ENCODE measurements at regions of chr17 and their contacts with region 1.

Region 1: DNA sequence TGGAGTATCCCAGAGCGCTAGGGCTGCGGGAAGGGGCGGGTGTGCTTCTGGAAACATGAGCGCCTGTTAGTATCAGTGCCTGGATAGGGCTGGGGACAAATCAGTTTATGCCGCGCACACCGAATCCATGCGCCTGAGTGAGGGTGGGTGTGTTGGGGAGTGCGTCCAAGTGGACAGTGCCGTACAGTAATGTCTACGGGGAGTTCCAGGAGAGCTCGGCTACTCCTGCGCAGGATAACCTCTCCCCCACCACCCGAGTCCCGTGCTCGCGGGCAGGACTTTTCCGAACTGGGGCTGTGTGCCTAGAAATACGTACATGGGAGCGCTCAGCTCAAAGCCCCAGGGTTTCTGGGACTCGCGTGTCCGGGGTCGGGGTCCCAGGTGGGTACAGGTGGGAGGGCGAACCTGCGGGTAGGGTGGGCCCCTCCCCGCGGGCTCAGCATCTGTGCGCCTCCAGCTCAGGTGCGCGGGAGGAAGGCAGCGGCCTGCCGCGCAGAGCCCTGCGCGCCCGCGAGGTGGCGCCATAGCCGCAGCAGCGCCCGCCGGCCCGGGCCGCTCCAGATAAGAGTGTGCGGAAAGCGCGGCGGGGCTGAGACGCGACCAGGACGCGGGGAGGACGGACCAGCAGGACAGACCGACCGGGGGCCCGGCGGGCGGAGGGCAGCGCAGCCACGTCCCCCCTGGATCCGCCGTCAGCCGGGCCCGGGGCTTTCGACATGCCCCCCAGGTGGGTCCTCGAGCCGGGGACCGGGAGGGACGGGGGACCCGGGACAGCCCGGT is at the start of gene HIC1:
- DNase-seq: peak; percentile 64 to 88 (median 73)
- ATAC-seq: peak; percentile 45
- H3K4me3 ChIP-seq: peak within 1 kb of the TSS; percentile 48 to 65
- H3K4me3 Mint-ChIP-seq: peak within 1 kb of the TSS; percentile 78
- H3K27ac ChIP-seq: peak within 1 kb of the TSS; percentile 56 to 74
- H3K27ac Mint-ChIP-seq: peak within 1 kb of the TSS; percentile 81
- H3K4me1 ChIP-seq: peaks cover 64% of the 10 kb centered on the region
- H3K4me1 Mint-ChIP-seq: peaks cover 31% of the 10 kb centered on the region
- H3K27me3 ChIP-seq: peaks cover 0 to 2% of the 10 kb centered on the region in 2 experiments
- H3K27me3 Mint-ChIP-seq: peaks cover 13% of the 10 kb centered on the region
- CTCF ChIP-seq: peak; percentile 85
- total RNA-seq, gene HIC1: 12.1 to 13.0 TPM

Region 2: DNA sequence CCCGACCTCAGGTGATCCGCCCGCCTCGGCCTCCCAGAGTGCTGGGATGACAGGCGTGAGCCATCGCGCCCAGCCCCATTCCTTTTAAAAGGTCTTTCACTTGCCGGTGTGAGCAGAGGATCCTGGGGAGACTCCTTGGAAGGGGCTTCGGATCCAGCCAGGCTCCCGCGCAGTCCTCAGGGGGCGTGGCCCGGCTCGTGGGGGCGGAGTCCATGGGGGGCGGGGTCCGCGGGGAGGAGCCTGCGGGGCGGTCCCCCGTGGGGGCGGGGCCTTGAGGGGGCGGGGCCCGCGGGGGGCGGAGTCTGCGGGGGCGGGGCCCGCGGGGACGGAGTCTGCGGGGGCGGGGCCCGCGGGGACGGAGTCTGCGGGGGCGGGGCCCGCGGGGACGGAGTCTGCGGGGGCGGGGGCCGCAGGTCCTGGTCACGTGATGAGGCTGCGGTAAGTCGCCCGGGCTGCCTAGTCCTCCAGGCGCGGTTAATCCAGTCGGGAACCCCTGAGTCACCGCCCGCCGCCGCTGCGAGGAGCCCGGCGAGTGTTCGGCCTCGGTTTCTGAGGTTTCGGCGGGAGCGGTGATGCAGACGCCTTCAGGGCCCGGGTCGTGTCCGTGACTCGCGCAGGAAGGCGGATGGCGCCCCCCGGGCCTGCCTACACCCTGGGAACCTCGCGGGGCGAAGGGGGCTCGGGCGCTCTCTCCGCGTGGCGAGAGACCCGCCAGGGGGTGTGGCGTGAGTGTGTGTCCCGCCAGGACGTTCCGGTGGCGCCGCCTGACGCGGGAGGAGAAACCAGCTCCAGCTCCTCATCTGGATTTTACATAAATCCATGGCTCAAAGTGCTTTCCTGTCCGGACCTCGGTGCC is 851.4 kb before region 1 on chr17:
- CTCF ChIA-PET with region 1: no interaction called
- POLR2A ChIA-PET with region 1: no interaction called
- intact Hi-C with region 1: loop called in 1 of 2 experiments (anchors 5 kb)
- DNase-seq: peak; percentile 30 to 78 (median 52)
- ATAC-seq: peak; percentile 66
- H3K4me3 ChIP-seq: peak overlapping the region in 1 of 2 experiments; percentile 35
- H3K4me3 Mint-ChIP-seq: peak overlapping the region; percentile 5
- H3K27ac ChIP-seq: no peak overlapping the region
- H3K27ac Mint-ChIP-seq: no peak overlapping the region
- H3K4me1 ChIP-seq: peaks cover 48% of the 10 kb centered on the region
- H3K4me1 Mint-ChIP-seq: peaks cover 34% of the 10 kb centered on the region
- H3K27me3 ChIP-seq: no peaks in the 10 kb centered on the region
- H3K27me3 Mint-ChIP-seq: no peaks in the 10 kb centered on the region
- CTCF ChIP-seq: no peak

Region 3: DNA sequence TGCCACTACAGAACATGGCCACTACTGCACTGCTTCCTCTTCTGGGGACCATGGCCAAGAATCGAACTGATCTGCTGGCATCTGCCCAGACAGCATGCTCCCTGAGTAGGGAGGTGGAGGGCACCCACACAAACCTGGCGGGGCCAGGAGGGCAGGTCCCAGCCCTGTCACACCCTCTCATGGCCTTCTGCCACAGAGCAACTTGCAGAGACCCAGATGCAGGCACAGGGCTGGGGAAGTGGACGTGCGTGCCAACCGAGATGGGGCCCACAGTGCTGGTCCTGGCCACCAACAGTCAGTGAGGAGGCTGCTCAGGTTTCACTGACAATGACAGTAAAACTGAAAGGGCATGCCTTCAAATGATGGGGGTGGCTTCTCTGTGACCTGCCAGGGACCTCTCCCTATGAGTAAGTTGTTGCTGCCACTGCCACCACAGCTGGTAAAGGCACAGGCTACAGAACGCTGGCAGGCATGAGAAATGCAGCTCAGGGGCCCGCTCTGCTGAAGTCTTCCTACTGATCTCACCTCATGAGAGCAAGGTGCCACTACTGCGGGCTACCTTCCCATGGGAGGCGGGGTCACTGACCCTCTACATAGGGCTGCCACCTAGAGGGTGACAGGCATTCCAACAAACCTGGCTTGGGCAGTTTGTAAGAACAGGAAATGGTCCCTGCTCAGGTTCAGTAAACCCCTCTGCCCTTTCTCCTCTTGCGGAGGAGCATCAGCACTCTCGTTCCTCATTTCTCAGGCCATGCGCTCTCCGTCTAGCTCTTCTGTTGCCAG is 15.7 kb after region 1 on chr17:
- CTCF ChIA-PET with region 1: interaction called, 19 read pairs
- POLR2A ChIA-PET with region 1: no interaction called
- intact Hi-C with region 1: no loop called
- DNase-seq: peak in 3 of 9 experiments; percentile 38 to 55 (median 48)
- ATAC-seq: peak; percentile 78
- H3K4me3 ChIP-seq: no peak overlapping the region
- H3K4me3 Mint-ChIP-seq: no peak overlapping the region
- H3K27ac ChIP-seq: peak overlapping the region in 1 of 2 experiments; percentile 26
- H3K27ac Mint-ChIP-seq: peak overlapping the region; percentile 73
- H3K4me1 ChIP-seq: peaks cover 9% of the 10 kb centered on the region
- H3K4me1 Mint-ChIP-seq: peaks cover 37% of the 10 kb centered on the region
- H3K27me3 ChIP-seq: no peaks in the 10 kb centered on the region
- H3K27me3 Mint-ChIP-seq: peaks cover 3% of the 10 kb centered on the region
- CTCF ChIP-seq: no peak

Region 4: GRCh38 chr17:2172077-2172851 is 117.6 kb after region 1 on chr17:
- CTCF ChIA-PET with region 1: no interaction called
- POLR2A ChIA-PET with region 1: no interaction called
- intact Hi-C with region 1: loop called in 1 of 2 experiments (anchors 5 kb)
- DNase-seq: no peak
- ATAC-seq: no peak
- H3K4me3 ChIP-seq: no peak overlapping the region
- H3K4me3 Mint-ChIP-seq: no peak overlapping the region
- H3K27ac ChIP-seq: no peak overlapping the region
- H3K27ac Mint-ChIP-seq: no peak overlapping the region
- H3K4me1 ChIP-seq: no peaks in the 10 kb centered on the region
- H3K4me1 Mint-ChIP-seq: no peaks in the 10 kb centered on the region
- H3K27me3 ChIP-seq: no peaks in the 10 kb centered on the region
- H3K27me3 Mint-ChIP-seq: no peaks in the 10 kb centered on the region
- CTCF ChIP-seq: no peak

Region 5: GRCh38 chr17:2259769-2260536 is 205.3 kb after region 1 on chr17:
- CTCF ChIA-PET with region 1: interaction called, 99 read pairs
- POLR2A ChIA-PET with region 1: interaction called, 10 read pairs
- intact Hi-C with region 1: no loop called
- DNase-seq: peak; percentile 7 to 87 (median 61)
- ATAC-seq: peak; percentile 55
- H3K4me3 ChIP-seq: peak overlapping the region in 1 of 2 experiments; percentile 21
- H3K4me3 Mint-ChIP-seq: peak overlapping the region; percentile 59
- H3K27ac ChIP-seq: peak overlapping the region; percentile 43 to 74
- H3K27ac Mint-ChIP-seq: peak overlapping the region; percentile 95
- H3K4me1 ChIP-seq: peaks cover 67% of the 10 kb centered on the region
- H3K4me1 Mint-ChIP-seq: peaks cover 69% of the 10 kb centered on the region
- H3K27me3 ChIP-seq: no peaks in the 10 kb centered on the region
- H3K27me3 Mint-ChIP-seq: no peaks in the 10 kb centered on the region
- CTCF ChIP-seq: no peak

Region 6: DNA sequence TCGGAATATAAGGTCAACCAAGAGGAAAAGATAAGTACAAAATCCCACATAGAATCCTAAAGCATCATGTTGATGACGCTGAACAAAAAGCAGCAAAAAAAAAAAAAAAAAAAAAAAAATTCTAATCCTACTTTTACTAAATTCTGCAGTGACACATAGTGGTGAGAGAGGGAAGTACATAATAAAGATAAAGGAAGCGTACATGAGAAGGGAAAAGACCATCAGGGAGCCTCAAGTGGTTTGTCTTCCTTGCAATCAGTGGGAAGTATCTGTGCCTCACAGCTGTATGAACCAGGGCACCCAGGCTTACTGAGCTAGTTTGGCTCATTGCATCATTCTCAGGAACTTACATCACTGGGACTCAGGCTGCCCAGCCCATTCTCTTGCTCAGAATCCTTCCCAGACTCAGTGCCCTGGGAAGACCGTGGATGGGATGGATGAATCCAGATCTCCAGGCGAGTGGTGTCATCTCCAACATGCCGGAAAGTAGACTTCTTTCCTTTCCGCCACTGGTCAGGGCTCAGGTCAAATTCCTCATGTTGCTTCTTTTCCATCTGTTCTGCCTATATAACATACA is 227.7 kb after region 1 on chr17:
- CTCF ChIA-PET with region 1: interaction called, 137 read pairs
- POLR2A ChIA-PET with region 1: interaction called, 3 read pairs
- intact Hi-C with region 1: loop called (anchors 1 kb)
- DNase-seq: peak in 2 of 9 experiments; percentile 71 to 81
- ATAC-seq: peak; percentile 77
- H3K4me3 ChIP-seq: no peak overlapping the region
- H3K4me3 Mint-ChIP-seq: no peak overlapping the region
- H3K27ac ChIP-seq: no peak overlapping the region
- H3K27ac Mint-ChIP-seq: peak overlapping the region; percentile 53
- H3K4me1 ChIP-seq: peaks cover 9% of the 10 kb centered on the region
- H3K4me1 Mint-ChIP-seq: peaks cover 21% of the 10 kb centered on the region
- H3K27me3 ChIP-seq: no peaks in the 10 kb centered on the region
- H3K27me3 Mint-ChIP-seq: no peaks in the 10 kb centered on the region
- CTCF ChIP-seq: peak; percentile 84

Region 7: DNA sequence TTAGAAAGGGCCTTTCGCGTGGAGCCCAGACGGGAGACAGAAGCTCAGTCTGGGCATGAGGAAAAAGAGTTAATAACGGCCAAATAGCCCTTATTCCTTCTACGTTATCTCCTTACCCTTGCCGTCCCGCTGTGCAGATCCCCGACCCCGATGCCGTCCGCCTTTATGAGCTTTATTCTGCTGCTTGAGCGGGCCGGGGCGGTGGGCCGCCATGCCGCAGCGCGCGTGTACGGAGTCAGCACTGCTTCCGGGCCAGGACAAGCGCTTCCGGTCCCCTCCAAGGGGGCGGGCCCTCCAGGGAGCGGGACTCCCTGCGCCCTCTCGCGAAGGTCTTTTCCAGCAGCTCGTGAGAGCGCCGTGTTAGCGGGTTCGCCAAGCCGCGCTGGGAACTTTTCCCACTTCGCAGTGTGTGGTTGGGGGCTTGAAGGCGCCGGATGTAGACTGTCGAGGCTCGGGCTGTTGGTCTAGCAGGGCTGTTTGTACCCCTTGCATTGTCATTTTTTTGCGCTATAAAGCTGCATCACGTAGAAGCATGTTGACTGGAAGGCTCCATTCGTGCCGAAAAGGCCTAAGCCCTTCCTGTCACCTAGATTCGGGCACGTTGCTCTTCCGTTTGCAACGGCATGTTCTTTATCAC is 281.6 kb after region 1 on chr17 and contains the start of gene TSR1:
- CTCF ChIA-PET with region 1: interaction called, 6 read pairs
- POLR2A ChIA-PET with region 1: no interaction called
- intact Hi-C with region 1: loop called (anchors 2 kb)
- DNase-seq: peak; percentile 68 to 94 (median 89)
- ATAC-seq: peak; percentile 80
- H3K4me3 ChIP-seq: peak within 1 kb of the TSS; percentile 77 to 88
- H3K4me3 Mint-ChIP-seq: peak within 1 kb of the TSS; percentile 98
- H3K27ac ChIP-seq: peak within 1 kb of the TSS; percentile 78 to 80
- H3K27ac Mint-ChIP-seq: peak within 1 kb of the TSS; percentile 95
- H3K4me1 ChIP-seq: peaks cover 16% of the 10 kb centered on the region
- H3K4me1 Mint-ChIP-seq: peaks cover 31% of the 10 kb centered on the region
- H3K27me3 ChIP-seq: no peaks in the 10 kb centered on the region
- H3K27me3 Mint-ChIP-seq: no peaks in the 10 kb centered on the region
- CTCF ChIP-seq: peak; percentile 24
- total RNA-seq, gene TSR1: 36.5 to 39.6 TPM

Measured in CD8-positive, alpha-beta T cell (primary cell).